CD4-positive, alpha-beta T cell (primary cell): ENCODE measurements at regions of chr11 and their contacts with region 1.

Region 1: GRCh38 chr11:14454861-14455632 is 44.6 kb downstream of the COPB1 start:
- DNase-seq: peak in 3 of 14 experiments; percentile 31 to 56 (median 55)
- ATAC-seq: peak; percentile 52
- H3K4me3 ChIP-seq: no peak overlapping the region
- H3K4me3 Mint-ChIP-seq: no peak overlapping the region
- H3K27ac ChIP-seq: no peak overlapping the region
- H3K27ac Mint-ChIP-seq: no peak overlapping the region
- H3K4me1 ChIP-seq: no peaks in the 10 kb centered on the region
- H3K4me1 Mint-ChIP-seq: no peaks in the 10 kb centered on the region
- H3K27me3 ChIP-seq: no peaks in the 10 kb centered on the region
- H3K27me3 Mint-ChIP-seq: no peaks in the 10 kb centered on the region
- CTCF ChIP-seq: peak; percentile 77

Region 2: GRCh38 chr11:13955971-13956421 is 499.1 kb before region 1 on chr11:
- CTCF ChIA-PET with region 1: no interaction called
- POLR2A ChIA-PET with region 1: no interaction called
- intact Hi-C with region 1: loop called in 1 of 2 experiments (anchors 10 kb)
- DNase-seq: peak; percentile 32 to 89 (median 52)
- ATAC-seq: peak; percentile 77
- H3K4me3 ChIP-seq: no peak overlapping the region
- H3K4me3 Mint-ChIP-seq: no peak overlapping the region
- H3K27ac ChIP-seq: no peak overlapping the region
- H3K27ac Mint-ChIP-seq: no peak overlapping the region
- H3K4me1 ChIP-seq: peaks cover 10% of the 10 kb centered on the region
- H3K4me1 Mint-ChIP-seq: no peaks in the 10 kb centered on the region
- H3K27me3 ChIP-seq: peaks cover 3 to 4% of the 10 kb centered on the region in 2 experiments
- H3K27me3 Mint-ChIP-seq: peaks cover 26% of the 10 kb centered on the region
- CTCF ChIP-seq: peak; percentile 86

Region 3: GRCh38 chr11:14300661-14301304 is 154.3 kb before region 1 on chr11:
- CTCF ChIA-PET with region 1: interaction called, 38 read pairs
- POLR2A ChIA-PET with region 1: interaction called, 5 read pairs
- intact Hi-C with region 1: loop called (anchors 1 to 2 kb)
- DNase-seq: peak in 13 of 14 experiments; percentile 13 to 68 (median 27)
- ATAC-seq: peak; percentile 94
- H3K4me3 ChIP-seq: no peak overlapping the region
- H3K4me3 Mint-ChIP-seq: no peak overlapping the region
- H3K27ac ChIP-seq: no peak overlapping the region
- H3K27ac Mint-ChIP-seq: no peak overlapping the region
- H3K4me1 ChIP-seq: peaks cover 5% of the 10 kb centered on the region
- H3K4me1 Mint-ChIP-seq: peaks cover 5% of the 10 kb centered on the region
- H3K27me3 ChIP-seq: no peaks in the 10 kb centered on the region
- H3K27me3 Mint-ChIP-seq: no peaks in the 10 kb centered on the region
- CTCF ChIP-seq: peak; percentile 60

Region 4: GRCh38 chr11:14480716-14481115 is 25.7 kb after region 1 on chr11:
- CTCF ChIA-PET with region 1: interaction called, 8 read pairs
- POLR2A ChIA-PET with region 1: interaction called, 3 read pairs
- intact Hi-C with region 1: loop called in 1 of 2 experiments (anchors 2 kb)
- DNase-seq: no peak
- ATAC-seq: no peak
- H3K4me3 ChIP-seq: no peak overlapping the region
- H3K4me3 Mint-ChIP-seq: no peak overlapping the region
- H3K27ac ChIP-seq: no peak overlapping the region
- H3K27ac Mint-ChIP-seq: no peak overlapping the region
- H3K4me1 ChIP-seq: no peaks in the 10 kb centered on the region
- H3K4me1 Mint-ChIP-seq: peaks cover 15% of the 10 kb centered on the region
- H3K27me3 ChIP-seq: no peaks in the 10 kb centered on the region
- H3K27me3 Mint-ChIP-seq: no peaks in the 10 kb centered on the region
- CTCF ChIP-seq: no peak